ENCODE measurements at regions of chr1 and their contacts with region 1.

Region 1: DNA sequence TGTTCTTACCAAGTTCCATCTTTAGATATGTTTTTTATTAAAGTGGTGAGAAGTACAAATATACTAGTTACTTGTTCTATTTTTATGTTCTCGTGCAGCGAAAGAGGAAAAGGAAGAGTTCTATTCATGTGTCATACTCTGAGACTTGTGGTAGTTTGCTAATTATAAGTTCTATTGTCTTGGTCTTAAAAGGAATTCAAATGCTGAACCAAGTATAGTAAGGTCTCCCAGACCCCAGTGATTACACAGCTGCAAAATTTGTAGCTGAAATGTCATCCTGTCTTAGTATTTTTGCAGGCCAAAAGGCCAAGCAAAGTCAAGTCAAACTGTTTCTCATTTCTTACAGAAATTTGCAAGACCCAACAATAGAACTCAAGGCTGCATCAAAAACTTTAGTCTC is 268.6 kb downstream of the CHRM3 start:
- DNase-seq: no peak
- ATAC-seq: no peak
- H3K4me3 ChIP-seq: no peak overlapping the region
- H3K27ac ChIP-seq: no peak overlapping the region
- H3K4me1 ChIP-seq: no peaks in the 10 kb centered on the region
- H3K27me3 ChIP-seq: no peaks in the 10 kb centered on the region

Region 2: GRCh38 chr1:239418681-239419080 is 236.3 kb before region 1 on chr1:
- intact Hi-C with region 1: loop called in 1 of 4 experiments (anchors 10 kb)
- DNase-seq: no peak
- ATAC-seq: no peak
- H3K4me3 ChIP-seq: no peak overlapping the region
- H3K27ac ChIP-seq: no peak overlapping the region
- H3K4me1 ChIP-seq: no peaks in the 10 kb centered on the region
- H3K27me3 ChIP-seq: no peaks in the 10 kb centered on the region